Colonic mucosa (tissue), 4 donors: ENCODE measurements at regions of chr11 and their contacts with region 1.

Region 1: DNA sequence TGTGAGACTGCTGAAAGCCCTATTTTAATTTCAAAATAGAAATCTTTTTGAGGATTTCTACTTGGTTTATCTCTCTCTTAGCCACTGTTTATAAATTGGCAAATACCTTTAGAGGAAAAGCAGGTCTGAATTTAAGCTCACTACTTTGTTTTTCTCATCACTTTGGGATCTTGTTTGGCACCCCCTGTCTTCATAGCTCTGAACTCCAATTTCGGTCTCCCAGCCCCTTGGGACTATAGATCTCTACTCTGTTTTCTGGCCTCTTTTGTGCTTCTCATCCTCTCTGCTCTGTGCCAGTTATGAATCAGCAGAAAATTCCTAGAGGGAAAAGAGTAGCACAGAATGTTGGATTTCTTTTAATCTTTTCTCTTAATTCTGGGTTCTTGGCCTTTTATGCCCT is 118.3 kb downstream of the CYP2R1 start:
- DNase-seq: no peak
- H3K4me3 ChIP-seq: no peak overlapping the region
- H3K27ac ChIP-seq: no peak overlapping the region
- H3K4me1 ChIP-seq: no peaks in the 10 kb centered on the region
- H3K27me3 ChIP-seq: no peaks in the 10 kb centered on the region
- CTCF ChIP-seq: no peak

Region 2: GRCh38 chr11:14537134-14537599 is 236.6 kb before region 1 on chr11:
- intact Hi-C with region 1: loop called (anchors 10 kb)
- DNase-seq: peak; percentile 53
- H3K4me3 ChIP-seq: no peak overlapping the region
- H3K27ac ChIP-seq: no peak overlapping the region
- H3K4me1 ChIP-seq: peaks cover under 1% of the 10 kb centered on the region
- H3K27me3 ChIP-seq: no peaks in the 10 kb centered on the region
- CTCF ChIP-seq: peak; percentile 83

Region 3: GRCh38 chr11:14974515-14975251 is 200.9 kb after region 1 on chr11:
- intact Hi-C with region 1: no loop called
- DNase-seq: peak; percentile 55
- H3K4me3 ChIP-seq: peak overlapping the region; percentile 25
- H3K27ac ChIP-seq: no peak overlapping the region
- H3K4me1 ChIP-seq: peaks cover 8% of the 10 kb centered on the region
- H3K27me3 ChIP-seq: peaks cover 54% of the 10 kb centered on the region
- CTCF ChIP-seq: peak; percentile 56